Activated CD4-positive, alpha-beta memory T cell treated with anti-CD3 and anti-CD28 coated beads for 36 hours (primary cell): ENCODE measurements at regions of chr1 and their contacts with region 1.

Region 1: GRCh38 chr1:198937231-198938031 is 298.6 kb downstream of the PTPRC start:
- DNase-seq: peak; percentile 53
- H3K4me3 Mint-ChIP-seq: peak overlapping the region; percentile 84
- H3K27ac Mint-ChIP-seq: peak overlapping the region; percentile 77
- H3K4me1 Mint-ChIP-seq: peaks cover 23% of the 10 kb centered on the region
- H3K27me3 Mint-ChIP-seq: no peaks in the 10 kb centered on the region

Region 2: GRCh38 chr1:197775282-197776262 is 1161.9 kb before region 1 on chr1 and contains the start of gene DENND1B:
- CTCF ChIA-PET with region 1: no interaction called
- POLR2A ChIA-PET with region 1: no interaction called
- intact Hi-C with region 1: loop called (anchors 5 kb)
- DNase-seq: peak; percentile 87
- H3K4me3 Mint-ChIP-seq: peak within 1 kb of the TSS; percentile 92
- H3K27ac Mint-ChIP-seq: peak within 1 kb of the TSS; percentile 100
- H3K4me1 Mint-ChIP-seq: peaks cover 69% of the 10 kb centered on the region
- H3K27me3 Mint-ChIP-seq: no peaks in the 10 kb centered on the region
- total RNA-seq, gene DENND1B: 12.5 to 15.6 TPM

Region 3: GRCh38 chr1:198423673-198424072 is 513.8 kb before region 1 on chr1:
- CTCF ChIA-PET with region 1: no interaction called
- POLR2A ChIA-PET with region 1: no interaction called
- intact Hi-C with region 1: no loop called
- DNase-seq: no peak
- H3K4me3 Mint-ChIP-seq: no peak overlapping the region
- H3K27ac Mint-ChIP-seq: no peak overlapping the region
- H3K4me1 Mint-ChIP-seq: no peaks in the 10 kb centered on the region
- H3K27me3 Mint-ChIP-seq: peaks cover 1% of the 10 kb centered on the region

Region 4: GRCh38 chr1:198612471-198613260 is 324.8 kb before region 1 on chr1:
- CTCF ChIA-PET with region 1: no interaction called
- POLR2A ChIA-PET with region 1: no interaction called
- intact Hi-C with region 1: loop called (anchors 5 kb)
- DNase-seq: no peak
- H3K4me3 Mint-ChIP-seq: peak overlapping the region; percentile 79
- H3K27ac Mint-ChIP-seq: peak overlapping the region; percentile 97
- H3K4me1 Mint-ChIP-seq: peaks cover 71% of the 10 kb centered on the region
- H3K27me3 Mint-ChIP-seq: no peaks in the 10 kb centered on the region

Region 5: GRCh38 chr1:198763298-198763714 is 174.1 kb before region 1 on chr1:
- CTCF ChIA-PET with region 1: no interaction called
- POLR2A ChIA-PET with region 1: no interaction called
- intact Hi-C with region 1: no loop called
- DNase-seq: no peak
- H3K4me3 Mint-ChIP-seq: no peak overlapping the region
- H3K27ac Mint-ChIP-seq: no peak overlapping the region
- H3K4me1 Mint-ChIP-seq: peaks cover 40% of the 10 kb centered on the region
- H3K27me3 Mint-ChIP-seq: no peaks in the 10 kb centered on the region

Region 6: GRCh38 chr1:198922638-198923430 is 14.6 kb before region 1 on chr1:
- CTCF ChIA-PET with region 1: interaction called, 4 read pairs
- POLR2A ChIA-PET with region 1: interaction called, 5 read pairs
- intact Hi-C with region 1: loop called (anchors 1 kb)
- DNase-seq: no peak
- H3K4me3 Mint-ChIP-seq: no peak overlapping the region
- H3K27ac Mint-ChIP-seq: peak overlapping the region; percentile 66
- H3K4me1 Mint-ChIP-seq: peaks cover 58% of the 10 kb centered on the region
- H3K27me3 Mint-ChIP-seq: no peaks in the 10 kb centered on the region

Region 7: DNA sequence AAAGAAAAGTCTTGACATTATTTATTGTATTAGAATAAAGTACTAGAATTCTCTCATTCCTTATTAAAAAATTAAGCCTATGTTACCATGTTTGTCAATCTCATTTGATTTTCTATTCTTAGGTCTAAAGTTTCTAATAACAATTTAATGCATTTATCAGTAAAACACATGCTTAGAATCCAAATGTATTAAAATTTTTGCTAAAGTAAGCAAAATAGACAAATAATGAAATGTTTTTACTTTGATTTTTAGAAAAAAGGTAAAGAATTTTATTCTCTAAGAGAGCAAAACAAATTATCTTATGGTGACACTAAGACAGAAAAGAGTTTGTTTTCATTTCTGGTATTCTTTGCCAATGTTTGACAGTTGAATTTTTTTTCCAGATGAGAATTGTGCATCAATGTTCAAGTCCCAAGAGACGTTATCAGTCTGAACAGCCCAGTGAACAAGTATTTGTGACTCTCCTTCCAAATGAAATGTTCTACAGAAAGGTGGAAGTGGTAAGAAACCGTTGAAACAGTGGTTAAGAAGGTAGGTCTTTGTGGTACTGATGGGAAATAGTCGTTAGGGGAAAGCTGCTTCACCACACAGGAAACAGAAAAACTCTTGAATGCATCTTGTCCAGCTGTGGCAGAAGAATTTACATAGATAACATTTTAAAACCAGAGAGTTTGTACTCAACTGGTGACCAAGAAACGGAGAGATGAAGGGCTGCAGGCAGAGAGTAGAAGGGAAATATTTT is 103.9 kb after region 1 on chr1:
- CTCF ChIA-PET with region 1: no interaction called
- POLR2A ChIA-PET with region 1: no interaction called
- intact Hi-C with region 1: loop called (anchors 5 kb)
- DNase-seq: peak; percentile 18
- H3K4me3 Mint-ChIP-seq: no peak overlapping the region
- H3K27ac Mint-ChIP-seq: peak overlapping the region; percentile 49
- H3K4me1 Mint-ChIP-seq: peaks cover 21% of the 10 kb centered on the region
- H3K27me3 Mint-ChIP-seq: no peaks in the 10 kb centered on the region

Region 8: DNA sequence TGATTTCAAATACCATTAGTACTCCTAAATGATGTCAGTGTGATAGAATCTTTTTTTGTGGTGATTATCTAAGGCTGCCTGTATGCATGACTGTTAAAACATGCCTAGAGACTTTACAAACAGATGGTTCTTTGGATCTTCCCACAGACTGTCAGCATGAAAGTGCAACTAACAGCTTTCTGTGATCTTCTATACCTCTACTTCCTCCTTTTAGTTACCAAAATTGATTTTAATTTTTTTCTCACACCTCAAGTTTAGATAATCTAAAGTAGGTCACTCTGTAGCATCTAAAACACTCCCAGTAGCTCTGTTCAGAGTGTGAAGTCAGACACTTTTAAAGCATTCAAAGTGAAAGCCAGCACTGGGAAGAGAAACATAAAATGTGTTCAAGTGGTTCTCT is 235.9 kb after region 1 on chr1:
- CTCF ChIA-PET with region 1: no interaction called
- POLR2A ChIA-PET with region 1: no interaction called
- intact Hi-C with region 1: loop called (anchors 5 kb)
- DNase-seq: no peak
- H3K4me3 Mint-ChIP-seq: no peak overlapping the region
- H3K27ac Mint-ChIP-seq: no peak overlapping the region
- H3K4me1 Mint-ChIP-seq: peaks cover 49% of the 10 kb centered on the region
- H3K27me3 Mint-ChIP-seq: no peaks in the 10 kb centered on the region